Endothelial cell of umbilical vein (primary cell): ENCODE measurements at regions of chr19 and their contacts with region 1.

Region 1: DNA sequence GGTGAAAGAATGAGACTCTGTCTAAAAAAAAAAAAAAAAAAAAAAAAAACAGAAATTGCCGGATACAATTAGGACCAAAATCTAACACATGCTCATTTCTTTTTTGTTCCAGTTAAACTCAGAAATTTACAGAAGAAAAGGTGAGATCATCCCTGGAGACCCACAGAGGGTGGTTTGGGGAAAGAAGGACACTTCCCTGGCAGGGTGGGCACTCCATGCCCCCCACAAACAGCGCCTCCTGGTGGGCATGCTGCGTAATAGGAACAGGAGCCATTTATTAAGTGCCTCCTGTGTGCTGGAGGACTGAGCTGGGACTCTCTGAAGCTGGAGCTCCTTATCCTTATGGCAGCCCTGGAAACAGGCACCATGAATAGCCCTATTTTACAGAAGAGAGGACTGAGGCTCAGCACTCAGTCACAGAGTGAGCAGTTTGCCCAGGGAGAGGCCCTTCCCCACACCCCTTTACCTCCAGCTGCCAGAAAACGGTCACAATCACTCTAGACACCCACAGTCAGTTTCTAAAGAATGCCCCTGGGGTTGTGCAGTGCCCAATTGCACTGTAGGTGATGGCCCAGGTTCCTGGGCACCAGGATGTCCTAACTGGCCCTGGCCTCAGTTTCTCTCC is 10.1 kb downstream of the C19orf38 start:
- DNase-seq: peak; percentile 38
- H3K4me3 ChIP-seq: no peak overlapping the region
- H3K27ac ChIP-seq: no peak overlapping the region
- H3K4me1 ChIP-seq: no peaks in the 10 kb centered on the region
- H3K27me3 ChIP-seq: no peaks in the 10 kb centered on the region
- CTCF ChIP-seq: peak; percentile 90 to 91
- POLR2A ChIP-seq: no peak

Region 2: DNA sequence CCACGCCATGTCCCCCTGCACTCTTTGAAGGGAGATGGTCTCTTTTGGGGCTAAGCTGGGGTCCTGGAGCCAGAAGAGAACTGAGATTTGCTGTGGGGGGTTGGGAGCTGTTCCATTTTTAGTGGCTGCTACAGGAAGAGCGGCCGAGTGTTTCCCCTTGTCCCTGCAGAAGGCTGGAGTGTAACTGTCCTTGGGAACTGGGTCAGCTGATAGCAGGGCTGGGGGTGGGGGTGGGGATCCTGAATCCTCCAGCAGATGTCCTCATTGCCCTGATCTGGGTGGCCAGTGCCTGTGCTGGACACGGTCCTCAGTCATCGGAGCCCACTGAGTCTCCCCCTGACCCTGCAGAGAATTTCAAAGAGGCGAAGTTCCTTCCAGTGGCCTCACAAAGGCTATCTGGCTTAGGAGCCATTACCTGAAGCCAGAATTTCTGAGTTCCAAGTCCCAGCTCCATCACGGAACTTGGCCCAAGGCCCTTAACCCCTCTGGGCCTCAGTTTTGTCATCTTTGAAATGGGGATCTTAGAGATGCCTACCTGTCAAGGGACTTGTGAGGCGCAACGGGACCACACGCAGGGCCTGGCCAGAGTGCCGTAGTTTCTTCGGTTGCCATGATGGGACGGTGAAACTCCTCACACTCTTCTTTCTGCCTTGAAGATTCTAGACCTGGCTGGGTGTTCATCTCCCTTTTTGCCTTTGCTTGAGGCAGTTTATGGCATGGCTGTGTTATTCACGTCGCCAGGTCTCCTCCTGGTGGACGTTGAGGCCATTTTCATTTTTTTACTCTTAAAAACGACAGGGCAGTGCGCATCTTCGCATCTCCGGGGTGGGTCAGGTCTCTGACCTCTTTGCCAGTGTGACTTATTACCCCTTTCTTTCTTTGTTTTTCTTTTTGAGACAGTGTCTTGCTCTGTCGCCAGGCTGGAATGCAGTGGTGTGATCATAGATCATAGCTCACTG is 88.5 kb before region 1 on chr19:
- CTCF ChIA-PET with region 1: interaction called, 13 read pairs
- POLR2A ChIA-PET with region 1: no interaction called
- dilution Hi-C with region 1: no loop called
- intact Hi-C with region 1: no loop called
- DNase-seq: peak; percentile 53
- H3K4me3 ChIP-seq: no peak overlapping the region
- H3K27ac ChIP-seq: no peak overlapping the region
- H3K4me1 ChIP-seq: peaks cover 3% of the 10 kb centered on the region
- H3K27me3 ChIP-seq: no peaks in the 10 kb centered on the region
- CTCF ChIP-seq: peak in 1 of 2 donors; percentile 42
- POLR2A ChIP-seq: no peak

Region 3: GRCh38 chr19:10820173-10820572 is 38.1 kb before region 1 on chr19:
- CTCF ChIA-PET with region 1: interaction called, 10 read pairs
- POLR2A ChIA-PET with region 1: no interaction called
- dilution Hi-C with region 1: no loop called
- intact Hi-C with region 1: no loop called
- DNase-seq: no peak
- H3K4me3 ChIP-seq: no peak overlapping the region
- H3K27ac ChIP-seq: no peak overlapping the region
- H3K4me1 ChIP-seq: no peaks in the 10 kb centered on the region
- H3K27me3 ChIP-seq: no peaks in the 10 kb centered on the region
- CTCF ChIP-seq: peak; percentile 25 to 31
- POLR2A ChIP-seq: no peak

Region 4: DNA sequence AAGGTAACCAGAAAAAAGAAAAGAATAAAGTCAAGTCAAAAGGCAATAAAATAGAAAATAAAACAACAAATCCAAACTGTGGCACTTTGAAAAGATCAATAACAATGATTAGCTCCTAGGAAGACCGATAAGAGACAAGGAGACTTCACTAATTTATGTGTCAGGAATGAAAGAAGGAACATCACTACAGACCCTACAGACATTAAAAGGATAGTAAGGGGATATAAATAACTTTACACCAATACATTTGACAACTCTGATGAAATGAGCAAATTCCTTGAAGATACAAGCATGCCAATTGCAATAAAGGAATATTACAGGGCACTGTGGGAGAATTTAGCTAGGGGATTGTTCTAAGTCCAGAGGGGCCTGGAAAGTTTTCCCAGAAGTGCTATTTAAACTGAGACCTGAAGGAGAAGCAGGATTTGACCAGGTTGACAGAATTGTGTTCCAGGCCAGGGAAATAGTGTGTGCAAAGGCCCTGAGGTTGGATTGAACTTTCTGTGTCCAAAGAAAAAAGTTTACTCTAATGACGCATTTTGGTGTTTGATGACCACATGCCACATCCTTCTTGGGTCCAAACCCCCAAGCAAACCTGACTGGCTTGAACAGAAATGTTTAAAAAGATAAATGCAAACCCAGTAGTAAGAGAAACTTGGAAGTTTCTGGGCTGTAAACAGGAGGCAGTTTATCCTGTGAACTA is 11.7 kb before region 1 on chr19:
- CTCF ChIA-PET with region 1: interaction called, 56 read pairs
- POLR2A ChIA-PET with region 1: interaction called, 8 read pairs
- dilution Hi-C with region 1: no loop called
- intact Hi-C with region 1: no loop called
- DNase-seq: no peak
- H3K4me3 ChIP-seq: no peak overlapping the region
- H3K27ac ChIP-seq: no peak overlapping the region
- H3K4me1 ChIP-seq: no peaks in the 10 kb centered on the region
- H3K27me3 ChIP-seq: peaks cover 1 to 2% of the 10 kb centered on the region in 2 experiments
- CTCF ChIP-seq: no peak
- POLR2A ChIP-seq: no peak